ENCODE measurements at regions of chr17 and their contacts with region 1.

Region 1: GRCh38 chr17:73645050-73645978 is 1.1 kb upstream of the SDK2 start:
- DNase-seq: peak; percentile 31
- H3K4me3 Mint-ChIP-seq: no peak overlapping the region
- H3K27ac Mint-ChIP-seq: no peak overlapping the region
- H3K4me1 Mint-ChIP-seq: peaks cover 16% of the 10 kb centered on the region
- H3K27me3 Mint-ChIP-seq: peaks cover 25% of the 10 kb centered on the region

Region 2: GRCh38 chr17:73566905-73567782 is 78.2 kb before region 1 on chr17:
- CTCF ChIA-PET with region 1: no interaction called
- intact Hi-C with region 1: loop called (anchors 1 kb)
- DNase-seq: peak; percentile 55
- H3K4me3 Mint-ChIP-seq: no peak overlapping the region
- H3K27ac Mint-ChIP-seq: peak overlapping the region; percentile 36
- H3K4me1 Mint-ChIP-seq: peaks cover 13% of the 10 kb centered on the region
- H3K27me3 Mint-ChIP-seq: no peaks in the 10 kb centered on the region

Region 3: GRCh38 chr17:73595479-73595878 is 49.8 kb before region 1 on chr17:
- CTCF ChIA-PET with region 1: no interaction called
- intact Hi-C with region 1: loop called (anchors 2 kb)
- DNase-seq: peak; percentile 55
- H3K4me3 Mint-ChIP-seq: no peak overlapping the region
- H3K27ac Mint-ChIP-seq: no peak overlapping the region
- H3K4me1 Mint-ChIP-seq: peaks cover 43% of the 10 kb centered on the region
- H3K27me3 Mint-ChIP-seq: no peaks in the 10 kb centered on the region

Region 4: GRCh38 chr17:73710095-73710592 is 64.8 kb after region 1 on chr17:
- CTCF ChIA-PET with region 1: no interaction called
- intact Hi-C with region 1: loop called (anchors 2 kb)
- DNase-seq: peak; percentile 84
- H3K4me3 Mint-ChIP-seq: no peak overlapping the region
- H3K27ac Mint-ChIP-seq: no peak overlapping the region
- H3K4me1 Mint-ChIP-seq: peaks cover 6% of the 10 kb centered on the region
- H3K27me3 Mint-ChIP-seq: no peaks in the 10 kb centered on the region

Region 5: GRCh38 chr17:73841431-73842060 is 196.2 kb after region 1 on chr17:
- CTCF ChIA-PET with region 1: no interaction called
- intact Hi-C with region 1: loop called (anchors 5 kb)
- DNase-seq: peak; percentile 43
- H3K4me3 Mint-ChIP-seq: no peak overlapping the region
- H3K27ac Mint-ChIP-seq: no peak overlapping the region
- H3K4me1 Mint-ChIP-seq: peaks cover 10% of the 10 kb centered on the region
- H3K27me3 Mint-ChIP-seq: no peaks in the 10 kb centered on the region

Region 6: DNA sequence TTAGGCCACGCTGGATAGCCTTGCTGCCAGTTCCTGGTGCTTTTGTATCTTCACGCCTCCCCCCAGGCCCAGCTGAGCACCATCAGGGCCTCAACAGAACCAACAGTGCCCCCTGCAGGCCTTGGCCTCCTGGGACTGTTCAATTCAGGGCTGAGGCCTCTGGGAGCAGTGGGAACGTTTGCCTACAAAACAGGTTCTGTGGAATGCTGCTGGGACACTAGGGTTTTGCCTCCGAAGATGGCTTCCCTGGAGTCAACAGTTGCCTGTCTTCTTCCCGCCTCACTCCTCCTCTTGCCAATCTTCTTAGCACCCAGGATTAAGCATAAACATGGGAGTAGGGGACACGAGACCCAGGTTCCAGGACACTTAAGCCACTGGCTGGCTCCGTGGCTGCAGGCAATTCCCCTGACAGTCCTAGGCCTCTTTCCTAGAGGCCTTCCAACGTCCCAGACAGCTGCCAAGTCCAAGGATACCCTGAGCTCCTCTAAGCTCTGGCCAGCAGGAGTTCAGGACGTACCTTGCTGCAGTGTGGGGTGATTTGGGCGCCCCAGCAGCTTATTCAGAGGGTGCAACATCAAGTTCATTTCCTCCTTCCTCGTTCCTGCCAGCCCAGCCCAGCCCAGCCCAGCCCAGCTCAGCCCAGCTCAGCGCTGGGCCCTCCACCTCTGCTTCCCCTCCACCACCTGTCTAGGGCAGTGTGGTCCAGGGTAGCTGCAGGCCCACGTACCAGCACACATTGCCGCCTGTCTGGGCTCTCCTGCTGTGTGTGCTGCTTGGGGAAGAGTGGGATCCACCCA is 311.6 kb after region 1 on chr17:
- CTCF ChIA-PET with region 1: no interaction called
- intact Hi-C with region 1: loop called (anchors 5 kb)
- DNase-seq: peak; percentile 67
- H3K4me3 Mint-ChIP-seq: no peak overlapping the region
- H3K27ac Mint-ChIP-seq: no peak overlapping the region
- H3K4me1 Mint-ChIP-seq: peaks cover 3% of the 10 kb centered on the region
- H3K27me3 Mint-ChIP-seq: peaks cover 3% of the 10 kb centered on the region

Region 7: DNA sequence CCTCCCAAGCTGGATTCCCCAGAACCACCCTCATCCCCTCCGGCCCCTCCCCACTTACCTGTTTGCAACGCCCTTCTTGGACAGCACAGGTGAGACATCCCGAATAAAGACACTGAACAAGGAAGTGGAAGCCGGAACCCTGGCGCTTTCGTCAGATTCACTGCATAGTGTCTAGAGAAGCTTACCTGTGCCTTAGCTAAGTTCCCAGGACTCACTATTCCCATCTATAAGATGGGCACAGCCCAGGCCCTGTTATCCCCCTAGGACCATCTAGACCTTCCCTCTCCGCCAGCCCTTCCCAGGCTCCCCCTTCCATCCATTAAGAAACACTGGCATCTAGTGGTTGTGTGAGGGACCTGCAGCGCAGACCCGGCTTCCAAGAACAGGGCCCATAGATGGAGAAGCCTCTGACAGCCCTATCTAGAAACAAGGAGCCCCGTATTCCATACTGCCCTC is 531.3 kb after region 1 on chr17:
- CTCF ChIA-PET with region 1: no interaction called
- intact Hi-C with region 1: loop called (anchors 5 kb)
- DNase-seq: peak; percentile 67
- H3K4me3 Mint-ChIP-seq: no peak overlapping the region
- H3K27ac Mint-ChIP-seq: no peak overlapping the region
- H3K4me1 Mint-ChIP-seq: no peaks in the 10 kb centered on the region
- H3K27me3 Mint-ChIP-seq: peaks cover 13% of the 10 kb centered on the region

Measured in activated naive CD4-positive, alpha-beta T cell treated with anti-CD3 and anti-CD28 coated beads for 36 hours (primary cell).